ENCODE measurements at regions of chr7 and their contacts with region 1.

Region 1: DNA sequence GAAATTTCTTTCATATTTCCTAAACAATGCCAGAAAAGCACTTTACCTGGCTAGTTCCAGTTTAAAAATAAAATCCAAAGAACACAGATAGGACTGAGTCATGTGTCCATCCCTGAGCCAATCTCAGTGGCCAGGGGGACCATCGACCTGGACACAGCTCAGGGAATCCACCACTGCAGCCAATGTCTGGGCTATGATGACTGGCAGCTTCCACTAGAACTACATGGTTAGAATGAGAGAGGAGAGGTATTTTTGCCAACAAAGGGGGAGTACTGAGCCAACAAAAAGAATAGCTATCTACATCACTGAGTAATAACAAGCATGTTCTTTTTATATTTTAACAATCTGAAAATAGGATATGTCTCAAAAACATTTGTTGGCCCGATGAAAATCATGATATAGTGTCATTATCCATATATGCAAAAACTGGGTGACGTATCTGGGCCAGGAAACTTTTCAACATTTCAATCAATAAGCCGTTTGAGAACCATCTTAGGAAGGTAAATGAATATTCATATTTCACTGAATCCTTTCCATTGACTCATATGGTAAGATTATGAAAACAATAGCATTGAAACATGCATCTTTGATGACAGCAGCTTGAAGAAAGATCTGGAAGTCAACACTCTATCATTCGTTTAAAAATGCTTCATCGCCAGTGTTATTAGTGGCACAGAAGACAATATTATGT is 104.0 kb downstream of the TPK1 start:
- DNase-seq: no peak
- H3K4me3 ChIP-seq: no peak overlapping the region
- H3K27ac ChIP-seq: no peak overlapping the region
- H3K4me1 ChIP-seq: peaks cover 0 to 9% (median 0%) of the 10 kb centered on the region in 4 donors
- H3K27me3 ChIP-seq: no peaks in the 10 kb centered on the region
- CTCF ChIP-seq: no peak
- EP300 ChIP-seq: no peak
- POLR2A ChIP-seq: no peak

Region 2: DNA sequence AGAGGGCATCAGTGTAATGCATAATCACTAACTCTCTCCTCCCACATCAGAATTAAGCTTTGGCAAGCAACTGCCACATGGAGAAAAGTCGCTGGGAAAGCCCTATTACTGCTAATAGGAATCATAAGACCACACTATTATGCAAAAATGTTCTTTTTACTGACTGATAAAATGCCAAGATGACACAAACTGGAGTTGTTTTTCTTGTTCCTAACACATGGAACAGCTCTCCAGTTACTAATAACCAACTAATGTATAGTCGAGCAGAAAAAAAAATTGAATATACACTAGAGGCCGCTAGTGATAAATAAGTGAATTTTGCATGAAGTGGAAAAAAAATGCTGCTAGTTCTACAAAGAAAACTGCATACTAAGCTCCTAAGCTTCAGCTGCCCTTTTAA is 61.6 kb before region 1 on chr7:
- intact Hi-C with region 1: no loop called
- DNase-seq: no peak
- H3K4me3 ChIP-seq: no peak overlapping the region
- H3K27ac ChIP-seq: no peak overlapping the region
- H3K4me1 ChIP-seq: no peaks in the 10 kb centered on the region
- H3K27me3 ChIP-seq: no peaks in the 10 kb centered on the region
- CTCF ChIP-seq: no peak
- EP300 ChIP-seq: no peak
- POLR2A ChIP-seq: no peak

Region 3: DNA sequence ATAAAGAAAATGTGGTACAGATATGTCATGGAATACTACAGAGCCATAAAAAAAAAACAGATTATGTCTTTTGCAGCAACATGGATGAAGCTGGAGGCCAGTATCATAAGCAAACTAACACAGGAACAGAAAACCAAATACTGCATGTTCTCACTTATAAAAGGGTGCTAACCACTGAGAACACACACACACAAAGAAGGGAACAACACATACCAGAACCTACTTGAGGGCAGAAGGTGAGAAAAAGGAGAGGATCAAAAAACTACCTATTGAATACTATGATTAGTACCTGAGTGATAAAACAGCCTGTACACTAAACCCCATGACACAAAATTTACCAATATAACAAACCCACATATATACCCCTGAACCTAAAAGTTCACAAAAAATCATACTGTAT is 40.6 kb before region 1 on chr7:
- intact Hi-C with region 1: no loop called
- DNase-seq: no peak
- H3K4me3 ChIP-seq: no peak overlapping the region
- H3K27ac ChIP-seq: no peak overlapping the region
- H3K4me1 ChIP-seq: no peaks in the 10 kb centered on the region
- H3K27me3 ChIP-seq: no peaks in the 10 kb centered on the region
- CTCF ChIP-seq: no peak
- EP300 ChIP-seq: no peak
- POLR2A ChIP-seq: no peak

Region 4: DNA sequence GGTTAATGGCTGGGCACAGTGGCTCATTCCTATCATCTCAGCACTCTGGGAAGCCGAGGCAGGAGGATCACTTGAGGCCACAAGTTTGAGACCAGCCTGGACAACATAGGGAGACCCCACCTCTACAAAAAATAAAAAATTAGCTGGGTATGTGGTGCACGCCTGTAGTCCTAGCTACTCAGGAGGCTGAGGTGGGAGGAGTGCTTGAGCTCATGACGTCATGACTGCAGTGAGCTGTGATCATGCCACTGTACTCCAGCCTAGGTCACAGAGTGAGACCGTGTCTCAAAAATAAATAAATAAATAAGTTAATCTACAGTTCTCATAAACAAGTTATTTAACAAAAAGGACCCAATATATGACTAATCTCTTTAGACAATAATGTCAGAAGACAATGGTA is 27.8 kb after region 1 on chr7:
- intact Hi-C with region 1: loop called (anchors 2 kb)
- DNase-seq: no peak
- H3K4me3 ChIP-seq: no peak overlapping the region
- H3K27ac ChIP-seq: no peak overlapping the region
- H3K4me1 ChIP-seq: no peaks in the 10 kb centered on the region
- H3K27me3 ChIP-seq: no peaks in the 10 kb centered on the region
- CTCF ChIP-seq: no peak
- EP300 ChIP-seq: no peak
- POLR2A ChIP-seq: no peak

Region 5: GRCh38 chr7:146443102-146443501 is 1711.3 kb after region 1 on chr7:
- intact Hi-C with region 1: no loop called
- DNase-seq: no peak
- H3K4me3 ChIP-seq: no peak overlapping the region
- H3K27ac ChIP-seq: no peak overlapping the region
- H3K4me1 ChIP-seq: no peaks in the 10 kb centered on the region
- H3K27me3 ChIP-seq: no peaks in the 10 kb centered on the region
- CTCF ChIP-seq: no peak
- EP300 ChIP-seq: no peak
- POLR2A ChIP-seq: no peak